ENCODE measurements at regions of chr11 and their contacts with region 1.

Region 1: DNA sequence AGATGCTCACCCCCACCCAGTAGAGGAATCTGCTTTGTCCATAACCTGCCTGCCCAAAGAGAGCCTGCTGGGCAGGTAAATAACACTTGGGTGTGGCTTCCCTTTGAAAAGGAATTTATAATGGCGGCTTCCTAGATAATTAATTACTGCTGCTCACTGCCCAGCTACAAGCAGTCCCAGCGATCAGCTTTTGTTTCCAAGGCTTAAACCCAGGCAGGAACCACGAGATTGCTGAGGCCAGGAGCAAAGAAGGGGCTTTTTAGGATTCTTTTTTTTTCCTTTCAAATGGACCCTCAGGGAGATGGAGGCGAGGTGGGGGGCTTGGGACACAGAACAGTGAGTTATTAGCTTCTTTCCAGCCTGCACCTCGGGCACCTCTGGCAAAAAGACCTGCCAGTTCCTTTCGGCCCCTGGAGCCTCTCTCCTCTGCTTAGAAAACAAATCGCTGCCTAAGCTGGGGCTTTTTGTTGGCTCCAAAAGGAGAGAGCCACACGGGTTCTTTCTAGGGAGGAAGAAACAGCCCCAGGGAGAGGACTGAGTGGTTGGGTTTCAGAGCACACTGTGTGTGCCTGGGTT is 107.2 kb downstream of the TSPAN18 start:
- DNase-seq: peak; percentile 40

Region 2: DNA sequence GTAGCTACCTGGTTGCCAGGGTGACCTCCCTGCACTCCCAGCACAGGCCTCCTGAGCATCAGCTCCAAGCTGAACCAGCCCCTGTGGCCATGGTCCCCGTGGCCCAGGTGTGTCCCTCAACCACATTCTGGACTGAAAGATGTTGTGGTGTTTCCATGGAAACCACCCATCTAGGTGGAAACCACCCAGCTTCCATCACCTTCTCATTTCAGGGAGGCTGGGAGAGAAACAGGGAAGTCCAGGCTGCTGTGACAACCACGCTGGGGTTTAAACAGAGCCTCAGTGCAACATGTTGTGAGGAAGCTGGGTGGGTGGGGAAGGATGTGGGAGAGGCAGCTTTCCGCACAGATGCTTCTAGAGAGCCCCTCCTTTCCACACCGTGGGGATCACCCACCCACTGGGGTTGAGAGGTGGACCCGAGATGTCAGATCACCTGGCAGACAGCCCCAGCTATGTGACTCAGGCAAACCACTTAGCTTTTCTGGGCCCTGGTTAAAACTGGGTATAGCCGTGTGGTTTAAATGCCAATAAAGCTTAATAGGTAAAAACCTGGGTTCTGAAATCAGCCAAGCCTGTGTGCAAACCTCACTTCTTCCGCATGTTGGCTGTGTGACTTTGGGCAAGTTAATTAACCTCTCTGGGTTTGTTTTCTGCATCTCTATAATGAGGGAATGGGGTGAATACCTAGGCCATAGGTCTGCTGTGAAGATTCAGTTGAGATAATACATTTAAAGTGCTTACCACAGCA is 222.1 kb before region 1 on chr11:
- intact Hi-C with region 1: no loop called
- DNase-seq: no peak

Region 3: GRCh38 chr11:45031912-45032519 is 198.1 kb after region 1 on chr11:
- intact Hi-C with region 1: no loop called
- DNase-seq: no peak

Region 4: GRCh38 chr11:46290598-46291309 is 1456.8 kb after region 1 on chr11:
- intact Hi-C with region 1: loop called in 1 of 2 experiments (anchors 5 kb)
- DNase-seq: peak; percentile 92

Measured in posterior vena cava (tissue), 2 donors.